CD8-positive, alpha-beta T cell (primary cell): ENCODE measurements at regions of chr18 and their contacts with region 1.

Region 1: DNA sequence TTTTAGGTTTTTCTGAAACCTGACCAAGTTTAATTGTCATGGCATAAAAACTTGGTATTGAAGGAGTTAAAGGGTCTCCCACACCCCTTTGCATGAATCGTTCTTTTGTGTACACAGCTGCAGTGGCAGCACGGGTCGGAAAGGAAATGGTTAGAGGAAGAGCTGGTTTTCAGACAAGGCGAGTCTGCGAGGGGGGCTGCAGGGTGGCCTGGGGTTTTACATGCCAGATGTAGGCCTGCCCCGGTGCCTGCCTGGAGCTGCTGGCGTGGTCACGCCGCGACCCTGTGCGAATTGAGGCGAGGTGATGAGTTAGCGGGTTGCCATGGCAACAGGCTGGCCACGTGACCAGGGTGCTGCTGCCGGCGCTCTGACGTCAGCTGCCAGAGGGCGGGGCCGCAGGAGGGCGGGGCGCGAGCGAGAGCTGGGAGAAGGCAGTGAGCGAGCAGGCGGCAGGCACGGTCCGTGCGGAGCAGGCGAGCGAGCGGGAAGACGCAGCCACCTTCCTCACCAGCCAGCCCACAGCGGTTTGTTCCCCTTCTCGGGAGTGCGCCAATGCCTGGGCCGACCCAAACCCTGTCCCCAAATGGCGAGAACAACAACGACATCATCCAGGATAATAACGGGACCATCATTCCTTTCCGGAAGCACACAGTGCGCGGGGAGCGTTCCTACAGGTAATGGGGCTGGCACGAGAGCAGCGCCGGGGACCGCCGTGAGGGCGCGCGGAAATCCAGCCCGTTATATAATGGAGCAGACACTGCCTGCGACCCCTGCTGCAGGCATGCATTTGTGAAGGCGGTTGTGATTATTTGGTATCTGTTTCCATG is at the start of gene MAPRE2:
- DNase-seq: peak; percentile 99 to 100 (median 100)
- ATAC-seq: peak; percentile 79
- H3K4me3 ChIP-seq: peak within 1 kb of the TSS; percentile 87 to 90
- H3K4me3 Mint-ChIP-seq: peak within 1 kb of the TSS; percentile 98
- H3K27ac ChIP-seq: peak within 1 kb of the TSS; percentile 93 to 96
- H3K27ac Mint-ChIP-seq: peak within 1 kb of the TSS; percentile 96
- H3K4me1 ChIP-seq: peaks cover 42% of the 10 kb centered on the region
- H3K4me1 Mint-ChIP-seq: peaks cover 44% of the 10 kb centered on the region
- H3K27me3 ChIP-seq: no peaks in the 10 kb centered on the region
- H3K27me3 Mint-ChIP-seq: no peaks in the 10 kb centered on the region
- CTCF ChIP-seq: no peak
- total RNA-seq, gene MAPRE2: 137 to 145 TPM

Region 2: DNA sequence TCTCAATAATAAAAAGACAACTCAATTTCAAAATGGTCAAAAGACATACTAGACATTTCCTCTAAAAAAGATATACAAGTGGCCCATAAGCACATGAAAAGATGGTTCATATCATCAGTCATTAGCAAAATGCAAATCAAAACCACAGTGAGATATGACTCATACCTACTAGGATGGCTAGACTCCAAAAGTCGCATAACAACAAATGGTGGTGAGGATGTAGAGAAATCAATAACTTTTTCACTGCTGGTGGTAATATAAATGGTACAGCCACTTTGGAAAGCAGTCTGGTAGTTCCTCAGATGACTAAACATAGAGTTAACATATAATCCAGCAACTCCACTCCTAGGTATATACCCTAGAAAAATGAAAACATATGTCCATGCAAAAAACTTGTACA is 574.1 kb before region 1 on chr18:
- CTCF ChIA-PET with region 1: no interaction called
- POLR2A ChIA-PET with region 1: no interaction called
- intact Hi-C with region 1: no loop called
- DNase-seq: no peak
- ATAC-seq: no peak
- H3K4me3 ChIP-seq: no peak overlapping the region
- H3K4me3 Mint-ChIP-seq: no peak overlapping the region
- H3K27ac ChIP-seq: no peak overlapping the region
- H3K27ac Mint-ChIP-seq: no peak overlapping the region
- H3K4me1 ChIP-seq: no peaks in the 10 kb centered on the region
- H3K4me1 Mint-ChIP-seq: no peaks in the 10 kb centered on the region
- H3K27me3 ChIP-seq: no peaks in the 10 kb centered on the region
- H3K27me3 Mint-ChIP-seq: no peaks in the 10 kb centered on the region
- CTCF ChIP-seq: no peak

Region 3: GRCh38 chr18:34709699-34710442 is 331.3 kb before region 1 on chr18 and contains the start of gene DTNA:
- CTCF ChIA-PET with region 1: no interaction called
- POLR2A ChIA-PET with region 1: no interaction called
- intact Hi-C with region 1: no loop called
- DNase-seq: peak in 1 of 9 experiments; percentile 14
- ATAC-seq: no peak
- H3K4me3 ChIP-seq: no peak within 1 kb of the TSS
- H3K4me3 Mint-ChIP-seq: no peak within 1 kb of the TSS
- H3K27ac ChIP-seq: no peak within 1 kb of the TSS
- H3K27ac Mint-ChIP-seq: no peak within 1 kb of the TSS
- H3K4me1 ChIP-seq: no peaks in the 10 kb centered on the region
- H3K4me1 Mint-ChIP-seq: no peaks in the 10 kb centered on the region
- H3K27me3 ChIP-seq: peaks cover 0 to 6% of the 10 kb centered on the region in 2 experiments
- H3K27me3 Mint-ChIP-seq: peaks cover 15% of the 10 kb centered on the region
- CTCF ChIP-seq: no peak
- total RNA-seq, gene DTNA: not detected

Region 4: DNA sequence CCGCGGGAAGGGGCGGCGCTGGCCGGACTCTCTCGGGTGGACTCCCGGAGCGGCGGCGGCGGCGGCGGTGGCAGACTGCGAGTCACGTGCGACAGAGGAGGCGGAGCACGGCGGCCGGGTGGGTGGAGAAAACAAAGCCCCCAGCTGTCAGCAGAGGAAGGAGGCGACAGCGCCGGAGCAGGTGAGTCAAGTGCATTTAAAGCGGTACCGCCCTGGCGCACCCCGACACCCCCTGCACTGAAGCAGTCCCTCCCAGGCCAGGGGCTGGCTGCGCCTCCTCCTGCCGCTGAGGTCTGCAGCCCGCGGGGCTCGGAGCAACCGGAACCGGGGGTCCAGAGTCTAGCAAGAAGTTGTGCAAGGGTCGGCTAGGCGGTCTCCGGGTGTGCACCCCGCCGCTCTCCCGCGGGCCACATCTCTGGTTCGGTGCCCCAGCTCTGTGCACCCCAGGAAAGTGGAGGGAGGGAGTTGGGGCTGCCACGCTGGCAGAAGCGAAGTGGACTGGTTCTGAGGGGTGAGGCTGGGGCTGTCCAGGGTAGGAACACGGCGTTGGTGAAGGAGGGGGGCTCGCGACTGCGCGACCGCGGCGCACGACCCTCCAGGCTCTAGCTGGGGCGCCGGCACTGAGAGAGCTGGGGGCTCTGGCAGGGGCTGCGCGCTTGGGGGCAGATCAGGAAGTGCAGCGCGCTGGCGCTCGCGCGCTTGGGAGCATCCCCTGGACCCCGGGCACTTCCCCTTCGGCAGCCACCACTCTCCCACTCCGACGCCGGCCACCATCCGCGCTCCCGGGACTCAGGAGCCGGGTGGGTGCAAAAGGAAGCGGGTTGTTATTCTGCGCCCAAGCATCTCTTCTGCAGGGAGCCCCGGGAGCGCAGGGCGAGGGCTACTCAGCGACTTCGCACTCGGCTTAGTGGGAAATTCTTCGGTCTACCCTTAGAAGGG is 64.0 kb before region 1 on chr18:
- CTCF ChIA-PET with region 1: interaction called, 3 read pairs
- POLR2A ChIA-PET with region 1: interaction called, 10 read pairs
- intact Hi-C with region 1: loop called (anchors 1 to 2 kb)
- DNase-seq: peak; percentile 55 to 89 (median 85)
- ATAC-seq: peak; percentile 81
- H3K4me3 ChIP-seq: peak overlapping the region; percentile 87 to 93
- H3K4me3 Mint-ChIP-seq: peak overlapping the region; percentile 96
- H3K27ac ChIP-seq: peak overlapping the region in 1 of 2 experiments; percentile 35
- H3K27ac Mint-ChIP-seq: peak overlapping the region; percentile 70
- H3K4me1 ChIP-seq: peaks cover 11% of the 10 kb centered on the region
- H3K4me1 Mint-ChIP-seq: peaks cover 26% of the 10 kb centered on the region
- H3K27me3 ChIP-seq: no peaks in the 10 kb centered on the region
- H3K27me3 Mint-ChIP-seq: no peaks in the 10 kb centered on the region
- CTCF ChIP-seq: no peak

Region 5: DNA sequence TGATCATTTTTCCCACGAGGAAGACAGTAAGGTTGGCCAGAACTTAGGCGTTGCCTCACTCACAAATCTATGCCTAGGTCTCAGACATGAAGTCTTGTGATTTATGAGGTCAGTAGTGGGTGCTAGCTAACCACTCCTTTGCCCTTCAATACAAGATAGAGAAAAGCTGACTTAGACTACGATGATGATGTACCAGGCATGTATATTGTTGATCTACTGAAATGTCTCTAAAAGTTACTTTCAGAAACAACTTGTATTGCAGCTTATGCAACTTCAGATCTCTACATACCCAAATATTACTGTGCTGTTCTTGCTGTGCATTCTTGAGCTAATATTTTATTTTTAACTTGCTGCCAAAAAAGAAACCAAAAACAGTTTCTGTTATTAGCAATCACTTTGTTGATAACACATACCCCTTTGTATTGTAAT is 30.6 kb after region 1 on chr18:
- CTCF ChIA-PET with region 1: no interaction called
- POLR2A ChIA-PET with region 1: interaction called, 5 read pairs
- intact Hi-C with region 1: loop called in 1 of 2 experiments (anchors 2 kb)
- DNase-seq: no peak
- ATAC-seq: no peak
- H3K4me3 ChIP-seq: no peak overlapping the region
- H3K4me3 Mint-ChIP-seq: no peak overlapping the region
- H3K27ac ChIP-seq: no peak overlapping the region
- H3K27ac Mint-ChIP-seq: peak overlapping the region; percentile 53
- H3K4me1 ChIP-seq: peaks cover 6% of the 10 kb centered on the region
- H3K4me1 Mint-ChIP-seq: peaks cover 70% of the 10 kb centered on the region
- H3K27me3 ChIP-seq: no peaks in the 10 kb centered on the region
- H3K27me3 Mint-ChIP-seq: no peaks in the 10 kb centered on the region
- CTCF ChIP-seq: no peak

Region 6: GRCh38 chr18:35122586-35123224 is 81.5 kb after region 1 on chr18:
- CTCF ChIA-PET with region 1: interaction called, 3 read pairs
- POLR2A ChIA-PET with region 1: interaction called, 3 read pairs
- intact Hi-C with region 1: loop called in 1 of 2 experiments (anchors 5 kb)
- DNase-seq: peak in 4 of 9 experiments; percentile 21 to 57 (median 38)
- ATAC-seq: peak; percentile 78
- H3K4me3 ChIP-seq: no peak overlapping the region
- H3K4me3 Mint-ChIP-seq: peak overlapping the region; percentile 60
- H3K27ac ChIP-seq: no peak overlapping the region
- H3K27ac Mint-ChIP-seq: peak overlapping the region; percentile 84
- H3K4me1 ChIP-seq: peaks cover 33% of the 10 kb centered on the region
- H3K4me1 Mint-ChIP-seq: peaks cover 62% of the 10 kb centered on the region
- H3K27me3 ChIP-seq: no peaks in the 10 kb centered on the region
- H3K27me3 Mint-ChIP-seq: no peaks in the 10 kb centered on the region
- CTCF ChIP-seq: peak; percentile 29

Region 7: DNA sequence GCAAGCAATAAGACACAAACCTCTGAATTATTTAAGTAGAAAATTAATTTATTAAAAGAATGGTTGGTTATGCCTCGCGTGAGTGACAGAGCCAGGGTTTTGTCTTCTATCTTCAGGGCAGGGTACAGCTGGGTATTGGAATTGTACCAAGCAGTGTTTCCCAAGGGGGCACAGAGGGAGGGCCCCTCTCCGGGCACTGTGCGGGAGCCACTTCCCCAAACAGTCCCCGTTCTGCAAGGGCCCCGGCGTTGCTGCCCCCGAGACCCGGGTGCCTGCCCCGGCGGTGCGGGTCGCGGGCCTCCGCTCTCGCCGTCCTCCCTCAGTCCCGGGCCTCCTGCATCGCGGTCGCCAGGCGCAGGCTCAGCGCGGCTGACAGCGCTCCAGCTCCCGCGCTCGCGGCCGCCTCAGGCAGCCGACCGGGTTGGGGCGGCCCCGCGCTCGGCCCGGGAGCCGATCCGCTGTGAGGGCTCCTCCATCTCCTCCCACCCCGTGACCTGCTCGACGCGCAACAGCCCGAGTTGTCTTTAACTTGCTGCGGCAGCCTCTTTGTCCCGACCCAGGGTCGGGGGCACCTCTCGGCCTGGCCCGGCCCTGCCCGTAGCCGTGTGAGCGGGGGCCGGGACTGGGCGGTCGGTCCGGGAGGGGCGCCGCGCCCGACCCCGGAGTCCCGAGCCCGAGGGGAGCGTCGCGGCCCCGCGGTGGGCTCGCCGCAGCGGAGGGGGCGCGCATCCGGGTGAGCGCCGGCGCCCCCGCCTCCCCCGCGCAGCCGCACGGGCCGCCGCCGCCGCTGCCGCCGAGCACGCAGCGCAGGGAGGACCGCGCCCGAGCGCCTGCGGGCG is 539.7 kb after region 1 on chr18:
- CTCF ChIA-PET with region 1: no interaction called
- POLR2A ChIA-PET with region 1: no interaction called
- intact Hi-C with region 1: loop called (anchors 10 kb)
- DNase-seq: peak; percentile 26 to 83 (median 59)
- ATAC-seq: peak; percentile 73
- H3K4me3 ChIP-seq: peak overlapping the region; percentile 53 to 65
- H3K4me3 Mint-ChIP-seq: peak overlapping the region; percentile 75
- H3K27ac ChIP-seq: peak overlapping the region; percentile 57 to 65
- H3K27ac Mint-ChIP-seq: peak overlapping the region; percentile 68
- H3K4me1 ChIP-seq: peaks cover 13% of the 10 kb centered on the region
- H3K4me1 Mint-ChIP-seq: peaks cover 27% of the 10 kb centered on the region
- H3K27me3 ChIP-seq: no peaks in the 10 kb centered on the region
- H3K27me3 Mint-ChIP-seq: peaks cover 14% of the 10 kb centered on the region
- CTCF ChIP-seq: no peak

Region 8: GRCh38 chr18:36067055-36067957 is 1026.1 kb after region 1 on chr18 and contains the start of gene RPRD1A:
- CTCF ChIA-PET with region 1: no interaction called
- POLR2A ChIA-PET with region 1: no interaction called
- intact Hi-C with region 1: loop called in 1 of 2 experiments (anchors 5 kb)
- DNase-seq: peak; percentile 92 to 99 (median 97)
- ATAC-seq: peak; percentile 93
- H3K4me3 ChIP-seq: peak within 1 kb of the TSS; percentile 95 to 98
- H3K4me3 Mint-ChIP-seq: peak within 1 kb of the TSS; percentile 94
- H3K27ac ChIP-seq: peak within 1 kb of the TSS; percentile 88 to 89
- H3K27ac Mint-ChIP-seq: peak within 1 kb of the TSS; percentile 96
- H3K4me1 ChIP-seq: peaks cover 29% of the 10 kb centered on the region
- H3K4me1 Mint-ChIP-seq: peaks cover 46% of the 10 kb centered on the region
- H3K27me3 ChIP-seq: no peaks in the 10 kb centered on the region
- H3K27me3 Mint-ChIP-seq: peaks cover 3% of the 10 kb centered on the region
- CTCF ChIP-seq: no peak
- total RNA-seq, gene RPRD1A: 13.8 to 15.8 TPM